GM12878 (cell line): ENCODE measurements at regions of chr6 and their contacts with region 1.

Region 1: DNA sequence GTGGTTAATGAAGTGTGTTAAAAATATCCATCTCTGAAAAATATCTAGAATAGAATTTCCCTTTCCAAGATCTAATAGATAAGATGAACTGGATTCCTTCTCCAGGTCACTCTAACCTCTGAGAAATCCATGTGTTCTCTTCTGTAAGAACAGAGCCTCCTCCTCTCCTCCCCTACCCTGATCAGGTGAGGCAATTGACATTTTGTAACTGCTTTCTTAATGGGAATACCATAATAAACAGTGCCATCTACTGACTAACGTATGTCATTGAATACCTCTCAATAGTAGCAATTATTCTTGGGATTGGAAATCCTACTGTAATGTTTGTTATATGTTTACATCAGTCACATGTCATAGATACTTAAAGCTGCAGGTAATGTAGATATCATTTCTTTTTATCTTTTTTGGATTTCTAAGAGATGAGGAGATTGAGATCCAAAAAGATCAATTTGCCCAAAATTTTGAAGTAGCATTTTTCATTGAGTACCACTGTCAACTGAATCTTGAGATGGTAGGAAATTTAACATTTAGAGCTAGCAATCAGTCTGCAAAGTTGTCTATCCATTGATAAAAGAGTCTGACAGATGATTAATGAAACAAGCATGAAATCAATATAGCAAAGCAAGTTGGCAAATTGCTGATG is 365.8 kb upstream of the HSF2 start:
- DNase-seq: no peak
- ATAC-seq: peak; percentile 84
- H3K4me3 ChIP-seq: no peak overlapping the region
- H3K27ac ChIP-seq: no peak overlapping the region
- H3K4me1 ChIP-seq: no peaks in the 10 kb centered on the region
- H3K27me3 ChIP-seq: no peaks in the 10 kb centered on the region
- CTCF ChIP-seq: peak; percentile 40 to 62 (median 46); a peak in 5 of 6 replicates
- EP300 ChIP-seq: no peak
- POLR2A ChIP-seq: no peak
- RAD21 ChIP-seq: peak; percentile 60

Region 2: GRCh38 chr6:121430514-121431460 is 602.9 kb before region 1 on chr6:
- CTCF ChIA-PET with region 1: no interaction called
- POLR2A ChIA-PET with region 1: no interaction called
- RAD21 ChIA-PET with region 1: no interaction called
- SMC1A ChIA-PET with region 1: no interaction called
- in situ Hi-C with region 1: no loop called
- intact Hi-C with region 1: loop called (anchors 2 kb)
- DNase-seq: no peak
- ATAC-seq: no peak
- H3K4me3 ChIP-seq: no peak overlapping the region
- H3K27ac ChIP-seq: no peak overlapping the region
- H3K4me1 ChIP-seq: no peaks in the 10 kb centered on the region
- H3K27me3 ChIP-seq: no peaks in the 10 kb centered on the region
- CTCF ChIP-seq: peak; percentile 6 to 51 (median 33); a peak in 3 of 6 replicates
- EP300 ChIP-seq: no peak
- POLR2A ChIP-seq: no peak
- RAD21 ChIP-seq: peak; percentile 73

Region 3: GRCh38 chr6:121856296-121856695 is 177.4 kb before region 1 on chr6:
- CTCF ChIA-PET with region 1: no interaction called
- POLR2A ChIA-PET with region 1: no interaction called
- RAD21 ChIA-PET with region 1: no interaction called
- SMC1A ChIA-PET with region 1: no interaction called
- in situ Hi-C with region 1: no loop called
- intact Hi-C with region 1: loop called (anchors 5 kb)
- DNase-seq: no peak
- ATAC-seq: no peak
- H3K4me3 ChIP-seq: no peak overlapping the region
- H3K27ac ChIP-seq: no peak overlapping the region
- H3K4me1 ChIP-seq: no peaks in the 10 kb centered on the region
- H3K27me3 ChIP-seq: no peaks in the 10 kb centered on the region; a peak in 1 of 4 replicates
- CTCF ChIP-seq: no peak
- EP300 ChIP-seq: no peak
- POLR2A ChIP-seq: no peak
- RAD21 ChIP-seq: no peak

Region 4: DNA sequence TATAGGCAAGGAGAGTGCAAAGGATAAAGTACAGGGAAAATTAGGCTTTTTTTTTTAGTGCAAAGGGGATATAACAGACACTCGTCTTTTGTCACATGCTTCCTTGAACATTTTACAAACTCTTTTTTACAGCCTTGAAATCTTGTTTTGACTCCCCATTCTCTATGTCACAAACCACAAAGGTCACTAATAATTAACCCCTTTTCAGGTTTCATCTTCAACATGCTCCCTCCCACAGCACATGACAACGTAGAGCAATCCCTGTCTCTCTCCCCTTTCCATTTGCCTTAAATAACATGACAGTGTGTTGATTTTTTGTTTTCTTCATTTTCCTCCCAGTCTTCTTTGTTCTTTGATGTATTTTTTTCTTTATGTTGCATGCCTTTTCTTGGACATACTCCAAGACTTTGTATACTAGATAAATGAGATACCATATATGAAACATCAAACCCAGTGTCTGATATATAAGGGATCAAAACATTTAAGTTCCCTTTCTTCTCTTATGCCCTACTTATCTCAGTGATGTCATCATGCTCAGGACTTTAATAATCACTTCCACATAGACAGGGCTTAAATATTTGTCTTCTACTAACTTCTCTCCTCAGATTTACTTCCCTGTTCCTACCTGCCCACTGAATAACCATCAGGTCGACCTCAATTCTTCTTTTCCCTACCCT is 12.9 kb before region 1 on chr6:
- CTCF ChIA-PET with region 1: interaction called, 10 read pairs
- POLR2A ChIA-PET with region 1: no interaction called
- RAD21 ChIA-PET with region 1: interaction called, 3 read pairs
- SMC1A ChIA-PET with region 1: interaction called, 5 read pairs
- in situ Hi-C with region 1: no loop called
- intact Hi-C with region 1: no loop called
- DNase-seq: peak; percentile 13
- ATAC-seq: peak; percentile 90
- H3K4me3 ChIP-seq: no peak overlapping the region
- H3K27ac ChIP-seq: no peak overlapping the region
- H3K4me1 ChIP-seq: no peaks in the 10 kb centered on the region
- H3K27me3 ChIP-seq: no peaks in the 10 kb centered on the region
- CTCF ChIP-seq: no peak
- EP300 ChIP-seq: no peak
- POLR2A ChIP-seq: no peak
- RAD21 ChIP-seq: no peak